ENCODE measurements at regions of chr2 and their contacts with region 1.

Region 1: GRCh38 chr2:121356058-121356640 is 71.1 kb upstream of the TFCP2L1 start:
- DNase-seq: no peak
- H3K4me3 ChIP-seq: no peak overlapping the region
- H3K27me3 ChIP-seq: no peaks in the 10 kb centered on the region
- CTCF ChIP-seq: peak; percentile 85

Region 2: DNA sequence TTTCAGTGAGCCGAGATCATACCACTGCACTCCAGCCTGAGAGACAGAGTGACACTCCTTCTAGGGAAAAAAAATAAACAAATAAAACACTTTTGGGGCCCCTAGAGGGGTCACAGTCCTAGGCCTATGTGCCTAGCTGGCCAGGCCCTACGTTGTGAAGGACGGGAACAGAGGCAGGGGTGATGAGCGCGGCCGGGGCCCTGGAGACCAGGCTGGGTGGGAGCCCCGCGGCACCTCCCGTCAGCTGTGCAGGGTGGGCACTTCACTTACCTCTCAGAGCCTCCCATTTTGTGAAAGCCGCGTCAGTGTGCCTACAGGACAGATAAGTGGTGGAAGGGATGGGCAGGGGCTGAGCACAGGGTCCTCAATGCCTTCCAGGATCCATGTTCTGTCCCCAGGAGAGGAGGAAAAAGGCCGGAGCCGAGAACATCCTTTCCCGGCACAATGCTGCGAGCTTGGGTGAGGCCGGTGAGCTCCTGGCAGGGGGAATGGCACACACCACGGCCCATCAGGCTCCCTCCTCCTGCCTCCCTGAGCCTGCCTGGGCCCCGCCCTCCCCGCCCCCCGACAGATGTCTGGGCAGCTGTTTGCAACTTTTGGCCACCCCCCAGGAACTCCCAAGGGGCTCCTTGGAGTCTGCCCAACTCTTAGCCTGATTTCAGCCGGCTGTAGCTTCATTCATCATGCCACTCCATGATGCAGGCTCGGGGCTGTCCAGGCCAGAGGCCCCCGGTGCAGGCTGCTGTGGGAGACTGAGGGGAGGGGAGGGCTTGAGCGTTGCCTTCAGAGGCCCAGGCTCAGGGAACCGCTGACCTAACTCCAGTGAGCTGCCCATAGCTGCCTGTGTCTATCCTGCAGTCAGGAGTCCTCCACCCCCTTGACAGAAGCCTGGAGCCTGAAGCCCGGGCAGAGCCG is 267.6 kb before region 1 on chr2:
- CTCF ChIA-PET with region 1: interaction called, 60 read pairs
- POLR2A ChIA-PET with region 1: no interaction called
- DNase-seq: no peak
- H3K4me3 ChIP-seq: no peak overlapping the region
- H3K27me3 ChIP-seq: peaks cover 7% of the 10 kb centered on the region; the same call in 1 of the 2 replicates
- CTCF ChIP-seq: no peak

Region 3: GRCh38 chr2:121345887-121346286 is 10.3 kb before region 1 on chr2:
- CTCF ChIA-PET with region 1: interaction called, 36 read pairs
- POLR2A ChIA-PET with region 1: no interaction called
- DNase-seq: no peak
- H3K4me3 ChIP-seq: no peak overlapping the region
- H3K27me3 ChIP-seq: no peaks in the 10 kb centered on the region
- CTCF ChIP-seq: no peak